ENCODE measurements at regions of chr2 and their contacts with region 1.

Region 1: DNA sequence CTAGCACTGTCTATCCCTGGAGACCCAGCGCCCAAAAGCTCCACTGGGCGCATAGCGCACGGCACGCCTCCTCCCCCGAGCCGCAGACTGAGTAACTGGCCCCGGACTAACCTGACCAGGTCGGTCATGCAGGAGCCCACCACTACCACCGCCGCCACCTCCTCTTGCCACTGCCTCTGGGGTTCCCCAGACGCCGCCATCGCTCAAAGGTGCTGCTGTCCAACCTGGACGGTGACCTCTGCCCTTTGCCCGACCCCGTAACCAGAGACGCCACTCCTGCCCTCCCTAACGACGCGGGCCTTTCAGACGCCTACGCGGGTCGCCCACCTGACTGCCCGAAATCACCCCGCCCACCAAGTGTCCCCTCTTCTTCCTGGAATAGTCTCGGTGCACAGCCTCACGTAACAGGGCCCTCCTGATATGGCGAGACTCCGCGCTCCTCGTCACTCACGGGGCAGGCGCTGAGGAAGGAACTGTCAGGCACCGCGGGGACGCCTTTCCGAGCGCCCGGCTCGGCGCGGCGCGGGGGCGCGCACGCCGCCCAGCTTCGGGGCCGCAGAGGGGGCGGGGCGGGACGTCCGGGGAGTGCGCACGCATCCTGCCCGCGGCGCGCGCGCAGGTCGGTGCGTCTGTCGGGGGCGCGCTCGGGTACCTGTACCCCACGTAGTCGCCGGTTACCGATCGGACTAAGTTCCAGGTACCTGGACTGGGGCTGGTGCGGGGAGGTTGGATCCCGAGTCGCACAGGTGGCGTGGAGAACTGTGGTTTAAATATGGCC is at the starts of genes BABAM2 and RBKS:
- DNase-seq: peak; percentile 83
- H3K4me3 Mint-ChIP-seq: peak within 1 kb of the TSS; percentile 99
- H3K27ac Mint-ChIP-seq: peak within 1 kb of the TSS; percentile 100
- H3K4me1 Mint-ChIP-seq: peaks cover 36% of the 10 kb centered on the region
- H3K27me3 Mint-ChIP-seq: no peaks in the 10 kb centered on the region
- CTCF ChIP-seq: no peak
- total RNA-seq, gene BABAM2: 45.1 and 57.6 TPM in 2 replicates
- total RNA-seq, gene RBKS: 9.2 and 9.9 TPM in 2 replicates

Region 2: GRCh38 chr2:27765621-27766269 is 124.6 kb before region 1 on chr2:
- CTCF ChIA-PET with region 1: no interaction called
- POLR2A ChIA-PET with region 1: interaction called, 45 read pairs
- intact Hi-C with region 1: loop called (anchors 2 kb)
- DNase-seq: no peak
- H3K4me3 Mint-ChIP-seq: no peak overlapping the region
- H3K27ac Mint-ChIP-seq: no peak overlapping the region
- H3K4me1 Mint-ChIP-seq: peaks cover 23% of the 10 kb centered on the region
- H3K27me3 Mint-ChIP-seq: no peaks in the 10 kb centered on the region
- CTCF ChIP-seq: no peak

Region 3: DNA sequence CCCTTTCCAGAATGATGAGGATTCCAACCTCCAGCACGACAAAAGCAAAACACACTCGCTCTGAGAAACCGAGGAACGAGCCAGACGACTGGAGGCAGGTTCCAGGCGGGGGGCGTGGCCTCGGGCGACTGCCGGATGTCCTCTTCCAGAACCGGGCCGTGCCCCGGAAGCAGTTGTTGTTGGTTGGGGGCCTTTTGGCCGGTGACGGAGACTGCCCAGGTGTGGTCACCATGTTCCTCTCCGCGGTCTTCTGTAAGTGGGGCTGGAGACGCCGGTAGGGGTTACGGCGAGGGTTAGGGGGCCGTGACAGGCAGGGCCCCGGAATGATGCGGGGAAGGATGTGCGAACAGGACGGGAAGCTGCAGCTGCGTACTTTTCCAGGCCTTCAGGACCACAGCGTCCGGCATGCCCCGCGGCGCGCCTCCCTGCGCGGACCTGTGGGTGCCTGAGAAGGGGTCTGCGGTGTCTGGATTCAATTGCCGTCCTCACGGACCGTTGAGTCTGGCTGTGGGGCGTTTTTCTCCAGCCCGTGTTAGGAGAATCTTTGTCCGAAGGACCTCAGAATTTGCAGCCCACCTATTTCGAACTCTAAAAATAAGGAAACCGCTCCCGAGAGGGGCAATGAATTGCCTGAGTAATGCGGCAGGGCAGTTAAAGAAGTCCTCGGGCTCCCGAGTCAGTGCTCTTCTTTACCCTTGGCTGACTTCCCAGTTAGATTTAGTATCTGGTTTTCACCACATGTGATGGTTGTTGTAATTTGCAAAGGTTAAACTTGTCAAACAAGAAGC is 118.6 kb before region 1 on chr2 and contains the start of gene MRPL33:
- CTCF ChIA-PET with region 1: interaction called, 3 read pairs
- POLR2A ChIA-PET with region 1: interaction called, 45 read pairs
- intact Hi-C with region 1: no loop called
- DNase-seq: peak; percentile 88
- H3K4me3 Mint-ChIP-seq: peak within 1 kb of the TSS; percentile 98
- H3K27ac Mint-ChIP-seq: peak within 1 kb of the TSS; percentile 95
- H3K4me1 Mint-ChIP-seq: peaks cover 40% of the 10 kb centered on the region
- H3K27me3 Mint-ChIP-seq: no peaks in the 10 kb centered on the region
- CTCF ChIP-seq: no peak
- total RNA-seq, gene MRPL33: 204 and 233 TPM in 2 replicates

Region 4: DNA sequence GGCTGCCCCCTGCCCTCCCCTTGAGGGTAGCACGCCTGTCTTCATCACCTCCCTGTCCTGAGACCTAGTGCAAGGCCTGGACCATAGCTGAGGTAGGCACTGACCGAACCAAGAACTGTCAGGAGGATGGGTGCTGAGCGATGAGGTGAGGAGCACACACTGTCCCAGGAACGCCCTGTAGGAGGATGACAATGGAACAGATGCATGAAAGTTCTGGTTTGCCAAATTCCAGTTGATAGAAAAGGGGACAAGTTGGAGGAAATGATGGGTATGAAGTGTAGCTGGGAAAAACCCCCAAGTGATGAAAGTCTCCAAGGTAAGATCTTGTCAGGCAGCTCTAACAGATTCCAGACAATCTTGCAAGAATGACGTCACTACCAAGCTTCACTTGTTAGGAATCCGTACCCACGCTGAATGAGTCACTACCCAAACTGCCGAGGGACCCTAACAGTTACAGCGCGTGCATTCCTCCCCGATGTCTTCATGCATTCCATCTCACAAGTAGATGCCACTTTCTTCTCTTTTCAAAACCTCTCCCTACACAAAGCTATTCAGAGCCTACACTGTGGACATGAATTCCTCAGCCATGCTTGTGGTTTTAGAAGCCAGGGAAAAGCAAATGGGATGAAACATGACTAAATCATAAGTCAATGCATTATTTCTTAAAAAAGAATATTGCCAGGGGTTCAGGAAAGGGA is 91.2 kb before region 1 on chr2:
- CTCF ChIA-PET with region 1: no interaction called
- POLR2A ChIA-PET with region 1: interaction called, 4 read pairs
- intact Hi-C with region 1: loop called (anchors 2 kb)
- DNase-seq: peak; percentile 98
- H3K4me3 Mint-ChIP-seq: no peak overlapping the region
- H3K27ac Mint-ChIP-seq: peak overlapping the region; percentile 68
- H3K4me1 Mint-ChIP-seq: peaks cover 59% of the 10 kb centered on the region
- H3K27me3 Mint-ChIP-seq: no peaks in the 10 kb centered on the region
- CTCF ChIP-seq: no peak

Region 5: GRCh38 chr2:27807476-27807875 is 82.9 kb before region 1 on chr2:
- CTCF ChIA-PET with region 1: no interaction called
- POLR2A ChIA-PET with region 1: interaction called, 18 read pairs
- intact Hi-C with region 1: no loop called
- DNase-seq: peak; percentile 55
- H3K4me3 Mint-ChIP-seq: no peak overlapping the region
- H3K27ac Mint-ChIP-seq: no peak overlapping the region
- H3K4me1 Mint-ChIP-seq: peaks cover 39% of the 10 kb centered on the region
- H3K27me3 Mint-ChIP-seq: no peaks in the 10 kb centered on the region
- CTCF ChIP-seq: peak; percentile 47

Region 6: DNA sequence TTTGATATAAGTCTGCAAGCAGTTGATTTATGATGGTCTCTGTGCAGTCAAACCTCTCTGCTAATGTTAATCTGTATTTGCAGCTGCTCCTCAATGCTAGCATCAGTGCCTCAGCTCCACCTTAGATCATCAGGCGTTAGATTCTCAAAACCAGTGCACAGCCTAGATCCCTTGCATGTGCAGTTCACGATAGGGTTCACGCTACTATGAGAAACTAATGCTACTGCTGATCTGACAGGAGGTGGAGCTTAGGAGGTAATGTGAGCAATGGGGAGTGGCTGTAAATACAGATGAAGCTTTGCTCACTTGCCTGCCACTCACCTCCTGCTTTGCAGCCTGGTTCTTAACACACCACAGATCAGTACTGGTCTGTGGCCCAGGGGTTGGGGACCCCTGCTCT is 18.5 kb before region 1 on chr2:
- CTCF ChIA-PET with region 1: interaction called, 4 read pairs
- POLR2A ChIA-PET with region 1: interaction called, 12 read pairs
- intact Hi-C with region 1: no loop called
- DNase-seq: peak; percentile 35
- H3K4me3 Mint-ChIP-seq: no peak overlapping the region
- H3K27ac Mint-ChIP-seq: no peak overlapping the region
- H3K4me1 Mint-ChIP-seq: peaks cover 10% of the 10 kb centered on the region
- H3K27me3 Mint-ChIP-seq: no peaks in the 10 kb centered on the region
- CTCF ChIP-seq: no peak

Region 7: GRCh38 chr2:27954771-27955383 is 64.5 kb after region 1 on chr2:
- CTCF ChIA-PET with region 1: no interaction called
- POLR2A ChIA-PET with region 1: interaction called, 6 read pairs
- intact Hi-C with region 1: loop called (anchors 2 kb)
- DNase-seq: peak; percentile 98
- H3K4me3 Mint-ChIP-seq: peak overlapping the region; percentile 2
- H3K27ac Mint-ChIP-seq: peak overlapping the region; percentile 93
- H3K4me1 Mint-ChIP-seq: peaks cover 58% of the 10 kb centered on the region
- H3K27me3 Mint-ChIP-seq: no peaks in the 10 kb centered on the region
- CTCF ChIP-seq: peak; percentile 29

Region 8: GRCh38 chr2:28036307-28036706 is 146.0 kb after region 1 on chr2:
- CTCF ChIA-PET with region 1: no interaction called
- POLR2A ChIA-PET with region 1: no interaction called
- intact Hi-C with region 1: no loop called
- DNase-seq: no peak
- H3K4me3 Mint-ChIP-seq: no peak overlapping the region
- H3K27ac Mint-ChIP-seq: peak overlapping the region; percentile 44
- H3K4me1 Mint-ChIP-seq: no peaks in the 10 kb centered on the region
- H3K27me3 Mint-ChIP-seq: no peaks in the 10 kb centered on the region
- CTCF ChIP-seq: no peak